ENCODE measurements at regions of chr12 and their contacts with region 1.

Region 1: DNA sequence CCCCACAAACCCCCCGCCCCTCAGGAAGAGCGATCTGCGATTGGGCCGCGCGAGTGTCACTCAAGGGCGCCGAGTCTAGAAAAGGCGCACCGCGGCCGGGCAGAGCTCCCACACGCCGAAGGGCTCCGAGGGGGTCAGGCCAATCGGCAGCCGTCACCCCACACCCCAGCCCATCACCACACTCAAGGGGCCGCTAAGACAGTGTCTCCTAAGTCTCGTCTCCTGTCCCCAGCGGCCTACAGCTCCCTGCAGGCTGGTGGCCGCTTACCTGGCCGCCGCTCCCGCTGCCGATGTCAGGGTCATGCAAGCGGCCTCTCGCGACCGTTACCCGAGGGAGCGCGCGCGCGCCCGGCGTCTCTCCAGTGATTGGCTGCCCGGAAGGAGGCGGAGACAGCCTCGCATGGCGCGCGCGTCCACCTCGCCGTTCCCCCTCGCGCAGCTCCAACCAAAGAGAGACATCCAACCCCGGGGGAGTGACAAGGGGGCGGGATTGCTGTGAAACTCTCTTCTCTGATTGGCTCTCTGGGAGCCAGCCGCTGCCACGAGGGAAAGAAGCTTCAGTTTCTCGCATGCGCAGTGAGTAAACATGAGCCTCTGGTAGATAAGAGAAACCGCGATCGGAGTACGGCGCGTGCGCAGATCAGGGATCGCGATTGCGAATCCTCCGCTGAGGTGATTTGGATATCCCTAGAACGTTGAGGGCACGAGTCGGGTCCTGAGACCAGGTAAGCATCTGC is at the starts of genes MPHOSPH9 and MTRFR:
- DNase-seq: peak; percentile 99 to 100
- ATAC-seq: peak; percentile 96 to 97
- H3K4me3 ChIP-seq: peak within 1 kb of the TSS; percentile 84
- H3K27ac ChIP-seq: peak within 1 kb of the TSS; percentile 93 to 97
- H3K4me1 ChIP-seq: peaks cover 38% of the 10 kb centered on the region
- CTCF ChIP-seq: no peak
- EP300 ChIP-seq: no peak
- POLR2A ChIP-seq: peak; percentile 99
- RAD21 ChIP-seq: 0 out of 5 replicates have a peak, but pooled peaks of 1 of the 2 experiments have one; percentile 20
- polyA plus RNA-seq, gene MPHOSPH9: 52.0 and 74.9 TPM in 2 replicates
- polyA plus RNA-seq, gene MTRFR: 15.5 and 16.0 TPM in 2 replicates

Region 2: GRCh38 chr12:122895705-122896636 is 337.0 kb before region 1 on chr12 and contains the start of gene VPS37B:
- CTCF ChIA-PET with region 1: interaction called, 3 read pairs
- POLR2A ChIA-PET with region 1: interaction called, 10 read pairs
- DNase-seq: peak; percentile 87 to 98
- ATAC-seq: peak; percentile 77 to 85
- H3K4me3 ChIP-seq: peak within 1 kb of the TSS; percentile 89
- H3K27ac ChIP-seq: peak within 1 kb of the TSS; percentile 89 to 97
- H3K4me1 ChIP-seq: peaks cover 51% of the 10 kb centered on the region
- CTCF ChIP-seq: no peak
- EP300 ChIP-seq: no peak
- POLR2A ChIP-seq: peak; percentile 88
- RAD21 ChIP-seq: 0 out of 5 replicates have a peak, but pooled peaks of 1 of the 2 experiments have one; percentile 21
- polyA plus RNA-seq, gene VPS37B: 14.4 and 18.6 TPM in 2 replicates

Region 3: DNA sequence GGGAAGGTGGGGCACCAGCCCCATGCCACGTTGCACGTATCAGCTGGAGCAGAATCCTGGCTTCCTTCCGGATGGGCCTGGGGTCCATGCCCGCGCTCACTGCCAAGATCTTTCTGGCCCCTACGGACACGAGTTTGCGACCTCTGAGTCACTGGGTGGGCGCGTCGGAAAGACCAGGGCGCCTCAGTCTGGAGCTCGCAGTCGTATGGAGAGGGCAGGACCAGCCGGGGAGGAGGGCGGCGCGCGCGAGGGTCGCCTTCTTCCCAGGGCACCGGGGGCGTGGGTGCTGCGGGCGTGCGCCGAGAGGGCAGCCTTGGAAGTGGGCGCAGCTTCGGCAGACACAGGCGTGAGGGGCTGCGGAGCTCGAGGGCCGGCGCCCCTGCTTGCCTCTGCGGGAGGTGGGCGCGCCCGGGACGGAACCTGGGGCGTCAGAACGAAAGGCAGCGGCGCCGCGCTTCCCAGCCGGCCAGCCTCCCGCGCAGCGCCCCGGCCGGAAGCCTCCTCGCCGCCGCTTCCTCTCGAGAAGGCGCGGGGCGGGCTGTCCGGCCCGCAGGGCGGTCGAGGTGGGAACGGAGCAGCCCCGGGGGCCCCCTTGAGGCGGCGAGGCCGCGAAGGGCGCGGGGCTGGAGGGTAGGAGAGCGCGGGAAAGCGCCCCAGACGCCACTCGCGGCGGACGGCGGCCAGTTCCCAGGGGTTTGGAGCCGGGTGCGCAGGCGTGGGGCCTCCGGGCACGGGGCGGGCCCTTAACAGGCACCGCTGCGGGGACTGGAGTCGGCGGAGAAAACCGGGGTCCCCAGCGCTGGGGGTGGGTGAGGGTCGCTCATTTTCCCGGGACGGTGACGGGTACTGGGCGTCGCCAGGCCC is 252.6 kb before region 1 on chr12 and contains the start of gene ARL6IP4:
- CTCF ChIA-PET with region 1: interaction called, 26 read pairs
- POLR2A ChIA-PET with region 1: interaction called, 20 read pairs
- DNase-seq: peak; percentile 65 to 76
- ATAC-seq: peak; percentile 64 to 75
- H3K4me3 ChIP-seq: peak within 1 kb of the TSS; percentile 69
- H3K27ac ChIP-seq: peak within 1 kb of the TSS; percentile 92 to 99
- H3K4me1 ChIP-seq: peaks cover 25% of the 10 kb centered on the region
- CTCF ChIP-seq: no peak
- EP300 ChIP-seq: no peak
- POLR2A ChIP-seq: peak; percentile 39
- RAD21 ChIP-seq: peak in 1 of 2 experiments; percentile 20; a peak in 2 of 5 replicates
- polyA plus RNA-seq, gene ARL6IP4: 152 and 209 TPM in 2 replicates

Region 4: GRCh38 chr12:123056053-123056741 is 176.8 kb before region 1 on chr12:
- CTCF ChIA-PET with region 1: interaction called, 12 read pairs
- POLR2A ChIA-PET with region 1: interaction called, 3 read pairs
- DNase-seq: peak in 1 of 2 experiments; percentile 24
- ATAC-seq: peak; percentile 48 to 51; a peak in 3 of 6 replicates
- H3K4me3 ChIP-seq: no peak overlapping the region
- H3K27ac ChIP-seq: peak overlapping the region in 1 of 2 experiments; percentile 43; a peak in 1 of 6 replicates
- H3K4me1 ChIP-seq: peaks cover 14% of the 10 kb centered on the region
- CTCF ChIP-seq: no peak
- EP300 ChIP-seq: no peak
- POLR2A ChIP-seq: no peak
- RAD21 ChIP-seq: no peak

Region 5: GRCh38 chr12:123141615-123142517 is 91.1 kb before region 1 on chr12:
- CTCF ChIA-PET with region 1: interaction called, 5 read pairs
- POLR2A ChIA-PET with region 1: interaction called, 13 read pairs
- DNase-seq: peak in 1 of 2 experiments; percentile 80
- ATAC-seq: peak; percentile 79 to 86
- H3K4me3 ChIP-seq: peak overlapping the region; percentile 10; the same call in 1 of the 3 replicates
- H3K27ac ChIP-seq: peak overlapping the region; percentile 89 to 91
- H3K4me1 ChIP-seq: peaks cover 51% of the 10 kb centered on the region
- CTCF ChIP-seq: no peak
- EP300 ChIP-seq: peak in 1 of 2 experiments; percentile 66; a peak in 2 of 5 replicates
- POLR2A ChIP-seq: no peak
- RAD21 ChIP-seq: peak in 1 of 2 experiments; percentile 30; a peak in 2 of 5 replicates

Region 6: DNA sequence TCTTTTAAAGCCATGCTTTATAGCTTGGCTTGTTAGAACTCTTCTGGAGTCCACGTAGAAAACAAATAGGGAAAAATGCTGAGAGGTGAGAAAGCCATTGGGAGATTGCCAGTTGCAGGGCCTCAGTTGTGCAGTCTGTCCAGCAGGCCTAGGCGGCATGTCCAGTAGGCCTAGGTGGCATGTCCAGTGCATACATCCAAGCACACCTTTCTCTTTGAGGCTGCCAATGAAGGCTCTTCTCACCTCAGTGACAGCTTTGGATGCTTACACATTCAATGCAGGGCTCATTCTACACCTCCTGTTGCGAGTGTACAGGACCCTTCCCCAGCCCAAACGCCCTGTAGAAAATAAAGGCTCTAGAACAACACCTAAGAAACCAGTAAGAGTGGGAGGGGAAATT is 25.6 kb after region 1 on chr12:
- CTCF ChIA-PET with region 1: interaction called, 17 read pairs
- POLR2A ChIA-PET with region 1: interaction called, 4 read pairs
- DNase-seq: no peak
- ATAC-seq: peak in 1 of 2 experiments; percentile 19; a peak in 1 of 6 replicates
- H3K4me3 ChIP-seq: no peak overlapping the region
- H3K27ac ChIP-seq: no peak overlapping the region
- H3K4me1 ChIP-seq: peaks cover 8% of the 10 kb centered on the region; the same call in 2 of the 3 replicates
- CTCF ChIP-seq: no peak
- EP300 ChIP-seq: no peak
- POLR2A ChIP-seq: no peak
- RAD21 ChIP-seq: no peak

Region 7: DNA sequence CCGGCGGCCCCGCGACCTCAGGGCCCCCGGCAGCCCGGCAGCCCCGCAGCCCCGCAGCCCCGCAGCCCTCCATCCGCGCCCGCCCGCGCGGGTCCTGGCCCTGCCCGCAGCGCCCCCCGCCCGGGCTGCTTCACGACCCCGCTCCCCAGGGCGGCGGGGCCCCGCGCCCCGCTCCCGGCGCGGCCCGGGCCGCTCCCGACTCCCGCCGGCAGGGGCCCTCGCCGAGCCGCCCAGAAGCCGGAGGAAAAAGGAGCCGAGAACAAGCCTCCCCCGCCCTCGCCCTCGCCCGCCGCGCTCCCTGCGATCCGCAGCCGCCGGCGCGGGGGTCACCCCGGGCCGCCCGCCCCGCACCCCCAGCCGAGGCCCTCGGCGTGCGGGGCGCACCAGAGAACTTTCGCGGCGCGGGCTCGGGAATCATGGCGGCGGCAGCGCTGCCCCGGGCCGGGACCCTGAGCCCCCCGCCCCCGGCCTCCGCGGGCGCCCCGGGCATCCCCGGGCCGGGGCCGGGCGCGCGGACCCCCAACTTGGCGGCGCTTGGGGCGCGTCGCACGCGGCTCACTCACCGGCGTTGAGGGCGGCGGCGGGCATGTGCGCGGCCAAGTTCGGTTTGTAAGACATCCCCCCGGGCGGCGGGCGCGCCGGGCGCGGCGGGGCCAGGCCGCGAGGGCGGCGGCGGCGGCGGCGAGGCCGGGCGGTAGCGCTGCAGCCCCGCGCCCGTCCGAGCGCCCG is 38.2 kb after region 1 on chr12:
- CTCF ChIA-PET with region 1: no interaction called
- POLR2A ChIA-PET with region 1: no interaction called
- DNase-seq: peak; percentile 57 to 76
- ATAC-seq: peak; percentile 70 to 86
- H3K4me3 ChIP-seq: peak overlapping the region; percentile 94
- H3K27ac ChIP-seq: peak overlapping the region; percentile 96 to 100
- H3K4me1 ChIP-seq: peaks cover 16% of the 10 kb centered on the region
- CTCF ChIP-seq: peak; percentile 71
- EP300 ChIP-seq: no peak
- POLR2A ChIP-seq: no peak; the same call in 1 of the 2 replicates
- RAD21 ChIP-seq: peak; percentile 55 to 74

Region 8: DNA sequence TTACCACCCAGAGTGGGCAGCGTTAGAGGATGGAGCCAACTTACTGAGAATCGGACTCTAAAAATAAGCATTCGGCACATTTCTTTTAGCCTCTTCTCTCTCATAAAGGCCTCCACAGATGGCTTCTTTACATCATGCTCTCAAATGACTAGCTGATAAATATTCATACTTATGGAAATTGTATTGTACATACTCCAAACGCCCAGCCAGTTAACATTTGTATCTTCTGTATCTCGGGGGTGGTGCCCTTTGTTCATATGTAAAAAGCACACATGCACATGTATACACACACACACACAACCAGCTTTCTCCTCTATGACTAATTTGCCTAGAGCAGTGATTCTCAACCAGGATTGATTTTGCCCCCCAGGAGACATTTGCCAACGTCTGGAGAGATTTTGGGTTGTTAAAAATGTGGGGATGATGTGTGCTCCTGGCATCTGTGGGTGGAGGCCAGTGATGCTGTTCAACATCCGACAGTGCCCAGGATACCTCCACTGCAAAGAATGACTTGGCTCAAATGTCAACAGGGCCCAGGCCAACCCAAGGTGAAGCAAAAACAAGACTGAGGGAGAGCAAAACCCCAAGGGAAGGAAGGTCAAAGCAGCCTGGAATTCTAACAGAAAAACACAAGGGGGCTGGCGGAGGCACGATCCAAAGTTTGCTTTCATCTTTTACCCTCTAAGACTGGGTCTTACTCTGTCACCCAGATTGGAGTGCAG is 53.8 kb after region 1 on chr12:
- CTCF ChIA-PET with region 1: no interaction called
- POLR2A ChIA-PET with region 1: no interaction called
- DNase-seq: no peak
- ATAC-seq: peak; percentile 44 to 49; a peak in 4 of 6 replicates
- H3K4me3 ChIP-seq: no peak overlapping the region
- H3K27ac ChIP-seq: no peak overlapping the region
- H3K4me1 ChIP-seq: no peaks in the 10 kb centered on the region
- CTCF ChIP-seq: no peak
- EP300 ChIP-seq: no peak
- POLR2A ChIP-seq: no peak
- RAD21 ChIP-seq: no peak

Measured in A549 (cell line).